Natural killer cell (primary cell): ENCODE measurements at regions of chr2 and their contacts with region 1.

Region 1: GRCh38 chr2:136225950-136226835 is 108.2 kb upstream of the CXCR4 start:
- DNase-seq: peak; percentile 72 to 77
- ATAC-seq: peak; percentile 85 to 94 (median 93)
- H3K4me3 ChIP-seq: no peak overlapping the region
- H3K4me3 Mint-ChIP-seq: peak overlapping the region; percentile 40
- H3K27ac ChIP-seq: peak overlapping the region; percentile 61
- H3K27ac Mint-ChIP-seq: peak overlapping the region; percentile 86 to 87
- H3K4me1 ChIP-seq: peaks cover 31% of the 10 kb centered on the region
- H3K4me1 Mint-ChIP-seq: peaks cover 22 to 32% of the 10 kb centered on the region in 2 donors
- H3K27me3 ChIP-seq: no peaks in the 10 kb centered on the region
- H3K27me3 Mint-ChIP-seq: peaks cover 10 to 30% of the 10 kb centered on the region in 2 donors
- CTCF ChIP-seq: no peak

Region 2: GRCh38 chr2:135913727-135914365 is 312.3 kb before region 1 on chr2:
- intact Hi-C with region 1: loop called (anchors 10 kb)
- DNase-seq: peak in 1 of 2 donors; percentile 84
- ATAC-seq: peak; percentile 59 to 71 (median 70)
- H3K4me3 ChIP-seq: no peak overlapping the region
- H3K4me3 Mint-ChIP-seq: no peak overlapping the region
- H3K27ac ChIP-seq: no peak overlapping the region
- H3K27ac Mint-ChIP-seq: no peak overlapping the region
- H3K4me1 ChIP-seq: no peaks in the 10 kb centered on the region
- H3K4me1 Mint-ChIP-seq: no peaks in the 10 kb centered on the region
- H3K27me3 ChIP-seq: no peaks in the 10 kb centered on the region
- H3K27me3 Mint-ChIP-seq: no peaks in the 10 kb centered on the region
- CTCF ChIP-seq: peak; percentile 94

Region 3: GRCh38 chr2:136135921-136136906 is 90.0 kb before region 1 on chr2:
- intact Hi-C with region 1: loop called (anchors 2 kb)
- DNase-seq: peak; percentile 64 to 96
- ATAC-seq: peak; percentile 61 to 87 (median 81)
- H3K4me3 ChIP-seq: no peak overlapping the region
- H3K4me3 Mint-ChIP-seq: peak overlapping the region; percentile 62
- H3K27ac ChIP-seq: peak overlapping the region; percentile 89
- H3K27ac Mint-ChIP-seq: peak overlapping the region; percentile 93 to 99
- H3K4me1 ChIP-seq: peaks cover 79% of the 10 kb centered on the region
- H3K4me1 Mint-ChIP-seq: peaks cover 71 to 74% of the 10 kb centered on the region in 2 donors
- H3K27me3 ChIP-seq: no peaks in the 10 kb centered on the region
- H3K27me3 Mint-ChIP-seq: no peaks in the 10 kb centered on the region
- CTCF ChIP-seq: no peak

Region 4: GRCh38 chr2:136191041-136191440 is 35.2 kb before region 1 on chr2:
- intact Hi-C with region 1: no loop called
- DNase-seq: no peak
- ATAC-seq: no peak
- H3K4me3 ChIP-seq: no peak overlapping the region
- H3K4me3 Mint-ChIP-seq: no peak overlapping the region
- H3K27ac ChIP-seq: no peak overlapping the region
- H3K27ac Mint-ChIP-seq: no peak overlapping the region
- H3K4me1 ChIP-seq: no peaks in the 10 kb centered on the region
- H3K4me1 Mint-ChIP-seq: no peaks in the 10 kb centered on the region
- H3K27me3 ChIP-seq: no peaks in the 10 kb centered on the region
- H3K27me3 Mint-ChIP-seq: no peaks in the 10 kb centered on the region
- CTCF ChIP-seq: no peak

Region 5: DNA sequence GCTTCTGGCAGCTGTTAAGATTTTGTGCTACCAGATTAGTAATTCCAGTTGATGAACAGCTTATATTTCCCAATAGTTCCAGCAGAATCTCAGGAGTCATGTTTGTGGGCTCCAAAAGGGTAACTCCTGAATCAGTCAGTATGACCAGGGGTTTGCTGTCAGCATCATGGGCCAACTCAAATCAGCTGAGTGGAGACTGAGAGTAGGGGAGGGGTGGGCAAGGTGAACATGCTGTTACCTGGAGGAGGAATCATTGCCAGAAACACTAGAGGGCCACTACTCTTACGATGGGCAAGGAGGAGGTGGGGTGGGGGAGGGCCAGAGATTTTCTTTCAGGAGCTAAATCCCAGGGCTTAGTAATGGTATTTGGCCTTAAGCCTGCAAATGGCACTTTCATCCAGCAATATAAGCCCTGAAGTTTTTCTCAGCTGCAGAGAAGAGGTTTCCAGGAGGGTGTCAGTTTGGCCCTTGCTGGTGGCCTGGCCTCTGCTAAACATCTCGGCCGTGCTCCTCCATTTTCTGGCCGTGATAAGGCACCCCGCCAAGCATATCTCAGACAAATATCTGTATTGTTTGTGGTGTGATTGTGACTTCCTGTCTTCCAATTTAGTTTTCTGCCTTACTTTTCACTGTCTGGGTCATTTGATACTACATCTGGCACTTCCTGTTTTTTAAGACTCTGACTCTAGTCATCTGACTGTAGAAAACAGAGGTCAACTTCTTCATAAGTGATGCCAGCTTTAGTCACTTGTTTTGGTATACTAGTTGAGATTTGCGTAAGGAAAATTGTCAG is 12.3 kb after region 1 on chr2:
- intact Hi-C with region 1: loop called (anchors 2 kb)
- DNase-seq: peak; percentile 33 to 81
- ATAC-seq: peak; percentile 61 to 85 (median 77)
- H3K4me3 ChIP-seq: no peak overlapping the region
- H3K4me3 Mint-ChIP-seq: peak overlapping the region; percentile 11
- H3K27ac ChIP-seq: peak overlapping the region; percentile 94
- H3K27ac Mint-ChIP-seq: peak overlapping the region; percentile 93 to 97
- H3K4me1 ChIP-seq: peaks cover 43% of the 10 kb centered on the region
- H3K4me1 Mint-ChIP-seq: peaks cover 54 to 63% of the 10 kb centered on the region in 2 donors
- H3K27me3 ChIP-seq: no peaks in the 10 kb centered on the region
- H3K27me3 Mint-ChIP-seq: peaks cover 0 to 3% of the 10 kb centered on the region in 2 donors
- CTCF ChIP-seq: no peak

Region 6: DNA sequence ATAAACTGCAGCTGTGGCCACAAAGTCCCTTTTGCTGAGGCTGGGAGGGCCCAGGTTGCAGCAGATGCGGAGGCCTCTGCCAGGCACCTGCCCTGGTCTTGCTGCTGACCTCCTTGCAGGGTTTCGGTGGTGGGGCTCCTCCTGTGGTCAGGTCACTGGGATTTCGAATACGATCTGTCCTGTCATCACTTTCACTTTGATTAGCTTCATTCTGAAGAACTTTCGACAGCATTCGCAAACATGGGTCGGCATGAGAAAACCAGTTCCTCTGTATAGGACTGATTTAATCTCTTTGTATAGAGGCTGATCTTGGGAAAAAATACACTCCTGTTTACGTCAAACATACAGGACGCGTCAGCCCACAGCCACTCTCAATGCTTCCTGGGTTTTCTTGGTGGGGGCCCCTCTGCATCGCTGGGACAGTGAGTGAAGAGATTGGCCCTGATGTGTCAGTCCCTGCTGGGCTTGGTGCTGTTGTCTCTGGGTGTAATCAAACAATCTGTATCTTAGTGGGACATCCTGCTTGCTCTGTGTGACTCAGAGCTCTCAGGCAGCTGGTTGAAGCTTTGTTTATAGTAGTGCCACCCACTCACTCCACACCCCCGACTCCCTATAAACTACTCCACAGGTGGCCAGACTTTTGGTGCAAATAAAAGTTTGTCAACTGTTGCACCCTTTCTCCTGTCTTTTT is 101.1 kb after region 1 on chr2:
- intact Hi-C with region 1: loop called (anchors 1 kb)
- DNase-seq: peak; percentile 64 to 92
- ATAC-seq: peak; percentile 90 to 92 (median 92)
- H3K4me3 ChIP-seq: peak overlapping the region; percentile 19
- H3K4me3 Mint-ChIP-seq: peak overlapping the region; percentile 73
- H3K27ac ChIP-seq: peak overlapping the region; percentile 91
- H3K27ac Mint-ChIP-seq: peak overlapping the region; percentile 86 to 91
- H3K4me1 ChIP-seq: peaks cover 18% of the 10 kb centered on the region
- H3K4me1 Mint-ChIP-seq: peaks cover 16 to 38% of the 10 kb centered on the region in 2 donors
- H3K27me3 ChIP-seq: no peaks in the 10 kb centered on the region
- H3K27me3 Mint-ChIP-seq: no peaks in the 10 kb centered on the region
- CTCF ChIP-seq: no peak

Region 7: DNA sequence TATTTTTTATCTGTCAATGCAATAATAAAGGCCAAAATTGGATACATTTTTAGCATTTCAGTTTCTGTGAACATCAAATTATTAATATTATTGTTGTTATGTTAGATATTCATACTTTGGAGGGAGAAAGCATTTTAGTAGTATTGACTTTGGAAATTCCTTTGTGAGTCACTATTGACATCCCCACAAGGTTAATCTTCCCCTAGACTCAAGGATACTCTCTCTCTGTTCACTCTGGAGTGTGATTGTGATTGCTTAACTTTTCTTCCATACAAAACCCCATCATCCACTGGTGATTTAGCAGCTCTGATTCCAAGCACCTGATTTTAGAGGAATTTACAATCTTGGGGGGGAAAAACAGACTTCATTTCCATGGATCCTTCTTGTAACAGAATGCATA is 891.2 kb after region 1 on chr2:
- intact Hi-C with region 1: no loop called
- DNase-seq: no peak
- ATAC-seq: no peak
- H3K4me3 ChIP-seq: no peak overlapping the region
- H3K4me3 Mint-ChIP-seq: no peak overlapping the region
- H3K27ac ChIP-seq: no peak overlapping the region
- H3K27ac Mint-ChIP-seq: no peak overlapping the region
- H3K4me1 ChIP-seq: no peaks in the 10 kb centered on the region
- H3K4me1 Mint-ChIP-seq: no peaks in the 10 kb centered on the region
- H3K27me3 ChIP-seq: no peaks in the 10 kb centered on the region
- H3K27me3 Mint-ChIP-seq: no peaks in the 10 kb centered on the region
- CTCF ChIP-seq: no peak

Region 8: GRCh38 chr2:137764646-137765045 is 1538.5 kb after region 1 on chr2:
- intact Hi-C with region 1: no loop called
- DNase-seq: no peak
- ATAC-seq: no peak
- H3K4me3 ChIP-seq: no peak overlapping the region
- H3K4me3 Mint-ChIP-seq: no peak overlapping the region
- H3K27ac ChIP-seq: no peak overlapping the region
- H3K27ac Mint-ChIP-seq: no peak overlapping the region
- H3K4me1 ChIP-seq: no peaks in the 10 kb centered on the region
- H3K4me1 Mint-ChIP-seq: no peaks in the 10 kb centered on the region
- H3K27me3 ChIP-seq: no peaks in the 10 kb centered on the region
- H3K27me3 Mint-ChIP-seq: no peaks in the 10 kb centered on the region
- CTCF ChIP-seq: no peak